ENCODE measurements at regions of chr6 and their contacts with region 1.

Region 1: DNA sequence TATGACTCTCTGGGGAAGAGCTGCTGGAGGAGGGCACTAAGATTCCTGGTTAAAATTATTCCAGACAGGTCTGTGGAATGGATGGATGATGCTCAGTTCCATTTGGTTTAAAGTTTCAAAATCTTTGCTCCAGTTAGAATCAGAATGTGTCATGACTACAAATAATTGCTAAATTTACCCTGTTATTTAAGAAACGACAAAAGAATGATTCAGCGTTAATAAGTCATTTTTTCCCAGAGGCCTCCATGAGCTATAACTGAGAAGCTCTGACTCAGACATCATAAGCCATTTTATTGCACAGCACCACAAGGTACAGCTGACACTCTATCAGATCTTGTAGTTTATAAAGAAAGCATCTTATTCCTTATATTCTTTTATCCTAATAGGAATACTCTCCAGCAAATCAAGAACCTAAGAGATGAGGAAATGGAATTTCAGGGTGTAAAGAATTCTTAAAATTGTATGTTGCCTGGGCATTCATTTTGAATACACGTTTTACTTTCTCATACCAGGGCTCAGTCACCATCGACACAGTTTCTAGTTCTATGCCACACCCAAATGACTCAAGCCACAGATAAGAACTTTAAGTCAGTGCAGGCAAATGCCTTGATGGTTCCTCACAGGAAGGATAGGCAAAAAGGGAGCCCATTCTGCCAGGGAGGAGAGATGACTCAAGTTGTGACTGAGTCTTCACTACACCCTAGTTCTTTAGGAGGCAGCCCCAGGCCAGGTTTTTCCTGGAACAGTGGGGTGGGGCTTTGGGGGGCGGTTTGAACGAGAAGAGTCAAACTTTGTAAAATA is 636.0 kb downstream of the MMUT start:
- DNase-seq: peak; percentile 100
- H3K4me3 ChIP-seq: peak overlapping the region in 2 of 3 experiments; percentile 8 to 12
- H3K27ac ChIP-seq: peak overlapping the region; percentile 98
- H3K4me1 ChIP-seq: peaks cover 22% of the 10 kb centered on the region
- H3K27me3 ChIP-seq: no peaks in the 10 kb centered on the region
- CTCF ChIP-seq: no peak

Region 2: DNA sequence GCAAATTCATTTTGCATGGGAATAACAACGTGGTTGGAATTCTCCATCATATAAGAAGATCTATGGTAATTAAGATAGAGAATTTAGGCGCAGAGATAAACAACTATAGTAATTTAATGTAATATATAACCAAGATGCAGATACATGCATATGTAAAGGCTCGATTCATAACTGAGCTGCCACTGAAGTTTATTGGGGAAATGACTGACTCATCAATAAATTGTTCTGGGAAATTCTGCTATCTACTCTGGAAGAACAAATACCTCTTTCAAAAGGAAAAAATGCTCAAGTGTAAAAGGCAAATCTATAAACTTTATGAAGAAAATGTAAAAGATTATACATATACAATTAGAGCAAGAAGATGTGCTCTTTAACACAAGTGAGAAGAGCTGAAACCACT is 39.6 kb after region 1 on chr6:
- CTCF ChIA-PET with region 1: no interaction called
- dilution Hi-C with region 1: no loop called
- in situ Hi-C with region 1: no loop called
- intact Hi-C with region 1: no loop called
- DNase-seq: no peak
- H3K4me3 ChIP-seq: no peak overlapping the region
- H3K27ac ChIP-seq: no peak overlapping the region
- H3K4me1 ChIP-seq: no peaks in the 10 kb centered on the region
- H3K27me3 ChIP-seq: no peaks in the 10 kb centered on the region
- CTCF ChIP-seq: no peak

Region 3: DNA sequence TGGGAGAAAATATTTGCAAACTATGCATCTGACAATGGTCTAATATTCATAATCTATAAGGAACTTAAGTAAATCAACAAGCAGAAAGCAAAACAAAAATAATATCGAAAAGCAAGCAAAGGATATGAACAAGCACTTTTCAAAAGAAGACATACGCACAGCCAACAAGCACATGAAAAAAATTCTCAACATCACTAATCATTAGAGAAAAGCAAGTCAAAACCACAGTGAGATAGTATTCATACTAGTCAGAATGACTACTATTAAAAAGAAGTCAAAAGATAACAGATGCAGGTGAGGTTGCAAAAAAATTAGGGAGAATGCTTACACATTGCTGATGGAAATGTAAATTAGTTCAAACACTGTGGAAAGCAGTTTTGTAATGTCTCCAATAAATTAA is 225.8 kb after region 1 on chr6:
- CTCF ChIA-PET with region 1: no interaction called
- dilution Hi-C with region 1: no loop called
- in situ Hi-C with region 1: no loop called
- intact Hi-C with region 1: loop called (anchors 2 kb)
- DNase-seq: peak; percentile 68
- H3K4me3 ChIP-seq: no peak overlapping the region
- H3K27ac ChIP-seq: peak overlapping the region; percentile 81
- H3K4me1 ChIP-seq: peaks cover 15% of the 10 kb centered on the region
- H3K27me3 ChIP-seq: no peaks in the 10 kb centered on the region
- CTCF ChIP-seq: no peak

Measured in mammary epithelial cell (primary cell).